ENCODE measurements at regions of chr9 and their contacts with region 1.

Region 1: DNA sequence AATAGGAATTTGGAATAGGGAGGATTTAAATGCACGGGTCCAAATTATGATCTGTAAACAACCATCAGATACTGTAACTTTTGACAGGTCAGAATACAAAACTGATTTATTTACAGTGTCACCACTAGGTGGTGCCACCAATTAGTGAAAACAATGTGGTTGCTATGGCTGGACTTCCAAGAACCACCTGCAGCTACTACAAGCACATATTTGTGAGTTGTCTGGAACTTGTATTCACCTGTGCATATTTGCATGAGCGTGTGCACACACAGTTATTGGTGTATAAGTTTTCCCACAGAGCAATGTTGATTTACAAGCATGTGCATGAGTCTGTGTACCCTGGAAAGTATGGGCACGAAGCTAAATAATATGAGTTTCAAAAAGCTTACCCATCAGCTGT is 3.0 kb upstream of the HRCT1 start:
- DNase-seq: peak; percentile 65
- ATAC-seq: no peak
- H3K4me3 ChIP-seq: no peak overlapping the region
- H3K27ac ChIP-seq: no peak overlapping the region
- H3K4me1 ChIP-seq: peaks cover 29% of the 10 kb centered on the region
- H3K27me3 ChIP-seq: peaks cover 5% of the 10 kb centered on the region; the same call in 1 of the 2 replicates
- CTCF ChIP-seq: peak; percentile 73
- POLR2A ChIP-seq: no peak
- RAD21 ChIP-seq: peak; percentile 73

Region 2: GRCh38 chr9:35603987-35604577 is 299.0 kb before region 1 on chr9:
- CTCF ChIA-PET with region 1: no interaction called
- POLR2A ChIA-PET with region 1: no interaction called
- dilution Hi-C with region 1: no loop called
- in situ Hi-C with region 1: no loop called
- intact Hi-C with region 1: no loop called
- DNase-seq: peak; percentile 99
- ATAC-seq: peak; percentile 94
- H3K4me3 ChIP-seq: peak overlapping the region; percentile 53
- H3K27ac ChIP-seq: peak overlapping the region; percentile 75
- H3K4me1 ChIP-seq: peaks cover 5% of the 10 kb centered on the region
- H3K27me3 ChIP-seq: no peaks in the 10 kb centered on the region
- CTCF ChIP-seq: peak; percentile 82
- POLR2A ChIP-seq: peak; percentile 85
- RAD21 ChIP-seq: peak; percentile 62

Region 3: DNA sequence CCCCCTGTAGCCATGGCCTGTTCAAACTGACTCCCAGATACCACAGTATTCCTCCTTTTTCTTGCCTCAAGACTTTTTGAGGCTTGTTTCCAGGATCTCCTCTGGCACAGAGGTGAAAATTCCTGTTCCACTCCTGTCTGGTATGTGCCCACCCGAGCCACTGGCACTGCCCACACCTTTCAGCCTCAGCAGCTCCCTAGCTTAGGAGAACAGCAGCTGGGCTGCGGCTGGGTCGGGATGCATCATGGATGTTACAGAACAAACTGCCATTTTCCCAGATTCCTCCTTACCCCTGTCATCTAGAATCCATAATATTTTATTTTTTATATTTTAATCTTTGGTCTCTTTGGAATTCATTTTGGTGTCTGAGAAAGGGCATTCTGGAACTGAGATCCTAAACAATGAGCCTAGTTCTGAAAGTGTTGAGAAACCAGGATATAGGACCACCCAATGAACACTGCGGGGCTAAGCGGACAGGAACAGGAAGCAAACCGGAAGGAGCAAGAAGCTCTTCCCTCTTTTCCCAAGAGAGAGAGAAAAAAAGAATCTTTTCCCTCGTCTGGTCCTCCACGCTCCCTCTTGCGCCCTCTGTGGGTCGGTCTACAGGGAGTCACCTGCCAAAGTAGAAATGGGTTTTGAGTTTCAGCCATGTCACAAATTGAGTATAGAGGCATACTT is 42.4 kb after region 1 on chr9:
- CTCF ChIA-PET with region 1: interaction called, 21 read pairs
- POLR2A ChIA-PET with region 1: interaction called, 4 read pairs
- dilution Hi-C with region 1: no loop called
- in situ Hi-C with region 1: loop called (anchors 5 kb)
- intact Hi-C with region 1: loop called (anchors 1 kb)
- DNase-seq: peak; percentile 85
- ATAC-seq: peak; percentile 90
- H3K4me3 ChIP-seq: no peak overlapping the region; the same call in 1 of the 2 replicates
- H3K27ac ChIP-seq: peak overlapping the region; percentile 39
- H3K4me1 ChIP-seq: peaks cover 9% of the 10 kb centered on the region
- H3K27me3 ChIP-seq: no peaks in the 10 kb centered on the region
- CTCF ChIP-seq: peak; percentile 90
- POLR2A ChIP-seq: no peak
- RAD21 ChIP-seq: peak; percentile 84

Region 4: DNA sequence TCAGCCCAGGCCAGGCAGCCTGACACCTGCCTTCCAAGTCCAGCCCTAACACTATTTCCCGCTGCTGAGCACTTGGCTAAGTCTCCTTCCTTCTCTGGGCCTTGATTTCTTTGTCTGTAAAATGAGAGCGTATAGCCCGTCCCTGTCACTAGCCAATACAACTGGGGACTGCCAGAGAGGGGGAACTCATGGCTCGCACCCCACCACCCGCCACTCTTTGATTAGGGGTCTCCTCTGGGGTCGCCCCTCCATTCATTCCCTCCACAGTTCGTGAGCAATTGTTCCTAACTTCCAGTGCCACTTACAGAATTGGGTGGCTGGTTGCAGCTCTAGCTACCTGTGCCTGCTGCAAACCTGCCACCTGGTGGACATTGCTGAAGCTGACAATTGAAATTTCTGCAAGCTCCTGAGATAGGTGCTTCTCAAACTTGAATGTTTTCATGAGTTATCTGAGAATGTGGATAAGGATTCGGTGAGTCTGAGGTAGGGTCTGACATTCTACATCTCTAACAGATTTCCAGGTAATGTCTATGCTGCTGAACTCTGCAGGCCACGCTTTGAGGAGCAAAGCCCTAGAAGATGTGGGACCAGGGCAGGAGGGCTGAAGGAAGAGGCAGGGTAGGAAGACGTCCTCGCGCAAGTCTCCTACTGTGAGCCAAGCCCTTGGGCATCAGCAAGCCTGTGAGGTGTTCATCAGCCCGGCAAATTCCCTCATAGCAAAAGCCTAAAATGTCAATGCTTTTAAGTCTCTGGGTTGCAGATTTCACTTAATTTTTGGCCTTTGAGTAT is 120.4 kb after region 1 on chr9:
- CTCF ChIA-PET with region 1: interaction called, 3 read pairs
- POLR2A ChIA-PET with region 1: no interaction called
- dilution Hi-C with region 1: no loop called
- in situ Hi-C with region 1: no loop called
- intact Hi-C with region 1: loop called (anchors 1 kb)
- DNase-seq: peak; percentile 78
- ATAC-seq: peak; percentile 65
- H3K4me3 ChIP-seq: no peak overlapping the region
- H3K27ac ChIP-seq: no peak overlapping the region
- H3K4me1 ChIP-seq: peaks cover 16% of the 10 kb centered on the region
- H3K27me3 ChIP-seq: no peaks in the 10 kb centered on the region
- CTCF ChIP-seq: peak; percentile 79
- POLR2A ChIP-seq: no peak
- RAD21 ChIP-seq: peak; percentile 90

Measured in IMR-90 (cell line).